Uterus (tissue), 4 donors: ENCODE measurements at regions of chrX and their contacts with region 1.

Region 1: DNA sequence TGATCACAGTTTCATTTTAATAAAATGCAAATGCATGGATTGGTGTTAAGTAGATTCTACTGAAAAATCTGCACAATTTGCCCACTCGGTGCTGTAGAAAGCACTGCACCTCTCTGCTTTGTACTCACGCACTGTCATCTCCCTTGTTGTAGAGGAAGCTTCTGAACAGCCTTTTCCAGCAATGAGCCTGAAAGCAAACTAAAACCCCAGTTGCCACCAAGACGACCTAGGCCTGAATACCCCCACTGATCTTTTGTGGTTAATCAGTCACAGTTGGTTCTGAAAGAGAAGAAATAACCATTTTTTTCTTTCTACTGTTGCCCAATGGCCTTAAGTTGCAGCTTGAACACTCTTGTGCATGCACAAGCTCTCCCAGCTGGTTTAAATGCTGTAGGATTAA is 229.8 kb downstream of the NLGN4X start:
- DNase-seq: no peak
- H3K4me3 ChIP-seq: no peak overlapping the region
- H3K27ac ChIP-seq: no peak overlapping the region
- H3K4me1 ChIP-seq: no peaks in the 10 kb centered on the region
- H3K27me3 ChIP-seq: no peaks in the 10 kb centered on the region
- CTCF ChIP-seq: no peak
- POLR2A ChIP-seq: no peak

Region 2: GRCh38 chrX:6029014-6029413 is 30.1 kb after region 1 on chrX:
- intact Hi-C with region 1: loop called (anchors 2 kb)
- DNase-seq: no peak
- H3K4me3 ChIP-seq: no peak overlapping the region
- H3K27ac ChIP-seq: no peak overlapping the region
- H3K4me1 ChIP-seq: no peaks in the 10 kb centered on the region
- H3K27me3 ChIP-seq: no peaks in the 10 kb centered on the region
- CTCF ChIP-seq: no peak
- POLR2A ChIP-seq: no peak